K562 (cell line): ENCODE measurements at regions of chr1 and their contacts with region 1.

Region 1: DNA sequence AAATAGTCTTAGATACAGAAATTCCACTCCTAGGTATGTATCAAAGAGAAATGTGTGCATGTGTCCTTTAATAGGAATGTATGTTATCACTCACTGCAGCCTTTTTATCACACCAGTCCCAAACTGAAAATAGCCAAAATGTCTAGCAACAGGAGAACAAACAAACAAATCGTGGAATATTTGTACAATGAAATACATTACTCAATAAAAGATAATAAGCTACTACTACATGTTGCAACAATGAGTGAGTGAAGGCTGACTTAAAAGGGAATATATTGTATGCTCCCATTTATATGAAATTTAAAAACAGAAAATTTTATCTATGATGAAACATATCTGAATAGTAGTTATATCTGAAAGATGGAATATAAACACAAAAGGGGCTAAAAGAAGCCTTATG is 212.1 kb upstream of the PLD5 start:
- DNase-seq: no peak
- ATAC-seq: no peak
- H3K4me3 ChIP-seq: no peak overlapping the region
- H3K27ac ChIP-seq: no peak overlapping the region
- H3K4me1 ChIP-seq: no peaks in the 10 kb centered on the region
- H3K27me3 ChIP-seq: no peaks in the 10 kb centered on the region
- CTCF ChIP-seq: no peak
- EP300 ChIP-seq: no peak
- POLR2A ChIP-seq: no peak
- RAD21 ChIP-seq: no peak

Region 2: DNA sequence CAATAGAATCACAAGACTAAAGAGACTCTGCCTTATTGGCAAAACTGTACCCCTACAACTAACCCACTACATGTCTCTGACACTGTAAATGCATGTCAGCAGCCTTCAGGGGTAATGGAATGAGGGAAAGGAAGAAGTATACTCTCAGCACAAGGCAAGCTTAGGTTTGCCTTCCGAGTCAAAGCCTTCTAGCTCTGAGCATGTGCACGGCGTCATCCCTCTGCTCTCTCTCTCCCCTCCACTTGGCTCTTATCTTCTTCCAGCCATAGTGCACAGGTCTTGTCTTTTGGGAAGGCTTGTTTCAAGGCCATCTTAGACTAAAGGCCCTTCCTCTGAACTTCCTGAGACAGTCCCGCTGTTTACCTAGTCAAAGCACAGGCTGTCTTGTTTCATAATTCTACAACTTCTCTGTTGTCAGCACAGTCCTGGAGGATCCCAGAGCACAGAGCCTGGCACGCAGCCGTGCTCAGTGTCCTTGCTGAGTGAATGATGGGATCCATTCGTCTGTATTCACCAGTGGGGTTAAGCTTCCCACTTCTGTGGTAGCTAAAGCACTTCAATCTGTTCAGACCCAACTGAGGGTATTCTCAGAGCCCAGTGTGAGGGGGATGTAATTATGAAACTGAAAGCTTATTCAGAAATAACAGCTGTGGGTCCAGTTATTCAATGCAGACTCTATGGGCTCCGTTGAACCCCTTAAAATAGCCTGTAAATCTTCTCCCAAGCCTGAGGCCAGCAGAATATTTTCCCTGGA is 45.6 kb before region 1 on chr1:
- CTCF ChIA-PET with region 1: no interaction called
- POLR2A ChIA-PET with region 1: no interaction called
- in situ Hi-C with region 1: no loop called
- intact Hi-C with region 1: loop called (anchors 2 kb)
- DNase-seq: no peak
- ATAC-seq: no peak
- H3K4me3 ChIP-seq: no peak overlapping the region
- H3K27ac ChIP-seq: no peak overlapping the region
- H3K4me1 ChIP-seq: no peaks in the 10 kb centered on the region
- H3K27me3 ChIP-seq: no peaks in the 10 kb centered on the region
- CTCF ChIP-seq: no peak
- EP300 ChIP-seq: no peak
- POLR2A ChIP-seq: no peak
- RAD21 ChIP-seq: no peak

Region 3: DNA sequence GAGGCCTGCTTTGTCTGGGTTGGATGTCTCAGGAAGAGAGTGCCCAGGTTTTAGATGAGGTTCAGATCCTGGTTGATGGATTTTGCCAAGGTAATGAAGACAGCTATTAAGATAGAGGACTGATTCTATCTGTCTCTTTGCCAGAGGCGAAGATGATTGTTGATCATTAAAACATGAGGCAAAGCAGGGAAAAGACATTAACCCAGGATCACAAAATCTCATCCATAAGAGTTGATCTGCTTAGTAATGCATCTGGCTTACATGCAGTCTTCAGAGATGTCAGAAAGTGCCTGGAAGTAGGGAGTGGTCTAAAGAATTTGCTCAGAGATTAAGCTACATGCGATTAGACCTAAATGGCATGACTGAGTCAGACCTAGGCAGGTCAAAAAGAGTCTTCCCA is 17.5 kb after region 1 on chr1:
- CTCF ChIA-PET with region 1: no interaction called
- POLR2A ChIA-PET with region 1: no interaction called
- in situ Hi-C with region 1: no loop called
- intact Hi-C with region 1: no loop called
- DNase-seq: no peak
- ATAC-seq: no peak
- H3K4me3 ChIP-seq: no peak overlapping the region
- H3K27ac ChIP-seq: no peak overlapping the region
- H3K4me1 ChIP-seq: no peaks in the 10 kb centered on the region
- H3K27me3 ChIP-seq: no peaks in the 10 kb centered on the region
- CTCF ChIP-seq: no peak
- EP300 ChIP-seq: no peak
- POLR2A ChIP-seq: no peak
- RAD21 ChIP-seq: no peak